ENCODE measurements at regions of chr6 and their contacts with region 1.

Region 1: GRCh38 chr6:142537612-142538478 is 236.0 kb downstream of the ADGRG6 start:
- DNase-seq: peak in 1 of 2 experiments; percentile 29
- H3K4me3 ChIP-seq: peak overlapping the region; percentile 42; the same call in 1 of the 2 replicates
- H3K27ac ChIP-seq: no peak overlapping the region
- H3K4me1 ChIP-seq: no peaks in the 10 kb centered on the region
- H3K27me3 ChIP-seq: no peaks in the 10 kb centered on the region
- CTCF ChIP-seq: peak; percentile 80

Region 2: GRCh38 chr6:142155895-142156757 is 381.7 kb before region 1 on chr6:
- CTCF ChIA-PET with region 1: no interaction called
- POLR2A ChIA-PET with region 1: no interaction called
- intact Hi-C with region 1: loop called (anchors 1 kb)
- DNase-seq: no peak
- H3K4me3 ChIP-seq: no peak overlapping the region
- H3K27ac ChIP-seq: no peak overlapping the region
- H3K4me1 ChIP-seq: no peaks in the 10 kb centered on the region
- H3K27me3 ChIP-seq: no peaks in the 10 kb centered on the region
- CTCF ChIP-seq: peak; percentile 74

Region 3: DNA sequence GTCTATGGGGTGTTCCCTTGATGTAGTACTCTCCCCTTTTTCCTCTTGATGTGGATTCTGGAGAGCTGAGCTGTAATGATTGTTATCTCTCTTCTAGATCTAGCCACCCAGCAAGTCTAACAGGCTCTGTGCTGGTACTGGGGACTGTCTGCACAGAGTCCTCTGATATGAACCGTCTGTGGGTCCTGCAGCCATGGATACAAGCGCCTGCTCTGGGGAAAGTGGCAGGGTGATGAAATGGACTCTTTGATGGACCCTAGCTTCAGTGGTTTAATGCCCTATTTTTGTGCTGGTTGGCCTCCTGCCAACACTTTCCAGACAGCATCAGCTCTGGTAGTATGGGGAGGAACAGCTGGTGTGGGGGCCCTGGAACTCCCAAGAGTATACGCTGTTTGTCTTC is 19.7 kb before region 1 on chr6:
- CTCF ChIA-PET with region 1: no interaction called
- POLR2A ChIA-PET with region 1: interaction called, 13 read pairs
- intact Hi-C with region 1: no loop called
- DNase-seq: peak; percentile 53 to 70
- H3K4me3 ChIP-seq: no peak overlapping the region
- H3K27ac ChIP-seq: no peak overlapping the region
- H3K4me1 ChIP-seq: peaks cover 9% of the 10 kb centered on the region; the same call in 1 of the 2 replicates
- H3K27me3 ChIP-seq: no peaks in the 10 kb centered on the region
- CTCF ChIP-seq: no peak

Region 4: DNA sequence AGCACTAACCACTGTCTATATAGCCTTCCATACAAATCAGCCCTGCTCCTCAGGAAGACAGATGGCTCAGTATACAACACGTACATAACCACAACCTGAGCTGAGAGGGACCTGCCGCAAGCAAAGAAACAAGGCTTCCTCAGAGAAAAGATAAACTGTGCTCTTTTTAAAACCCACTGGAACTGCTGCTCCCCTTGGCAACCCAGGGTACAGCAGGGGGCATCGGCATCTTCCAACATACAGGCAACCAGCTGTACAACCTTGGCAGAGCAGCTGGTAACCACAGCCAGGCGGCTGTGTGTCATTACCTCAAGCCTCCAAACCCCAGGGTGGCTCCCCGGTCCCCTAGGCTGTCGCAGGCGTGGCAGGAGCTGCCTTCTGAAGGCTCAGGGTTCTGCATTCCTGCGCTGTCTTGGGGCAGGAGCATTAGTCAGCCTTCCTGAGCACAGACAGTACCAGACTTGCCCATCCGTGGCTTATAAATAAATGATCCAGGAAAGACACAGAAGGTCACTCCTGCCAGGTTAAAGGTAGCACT is 13.5 kb after region 1 on chr6:
- CTCF ChIA-PET with region 1: no interaction called
- POLR2A ChIA-PET with region 1: no interaction called
- intact Hi-C with region 1: no loop called
- DNase-seq: peak; percentile 63 to 77
- H3K4me3 ChIP-seq: no peak overlapping the region
- H3K27ac ChIP-seq: no peak overlapping the region
- H3K4me1 ChIP-seq: 0 out of 2 replicates have a peak, but pooled peaks cover 9% of the 10 kb centered on the region
- H3K27me3 ChIP-seq: no peaks in the 10 kb centered on the region
- CTCF ChIP-seq: no peak